Activated CD4-positive, alpha-beta memory T cell treated with anti-CD3 and anti-CD28 coated beads for 36 hours (primary cell): ENCODE measurements at regions of chr7 and their contacts with region 1.

Region 1: DNA sequence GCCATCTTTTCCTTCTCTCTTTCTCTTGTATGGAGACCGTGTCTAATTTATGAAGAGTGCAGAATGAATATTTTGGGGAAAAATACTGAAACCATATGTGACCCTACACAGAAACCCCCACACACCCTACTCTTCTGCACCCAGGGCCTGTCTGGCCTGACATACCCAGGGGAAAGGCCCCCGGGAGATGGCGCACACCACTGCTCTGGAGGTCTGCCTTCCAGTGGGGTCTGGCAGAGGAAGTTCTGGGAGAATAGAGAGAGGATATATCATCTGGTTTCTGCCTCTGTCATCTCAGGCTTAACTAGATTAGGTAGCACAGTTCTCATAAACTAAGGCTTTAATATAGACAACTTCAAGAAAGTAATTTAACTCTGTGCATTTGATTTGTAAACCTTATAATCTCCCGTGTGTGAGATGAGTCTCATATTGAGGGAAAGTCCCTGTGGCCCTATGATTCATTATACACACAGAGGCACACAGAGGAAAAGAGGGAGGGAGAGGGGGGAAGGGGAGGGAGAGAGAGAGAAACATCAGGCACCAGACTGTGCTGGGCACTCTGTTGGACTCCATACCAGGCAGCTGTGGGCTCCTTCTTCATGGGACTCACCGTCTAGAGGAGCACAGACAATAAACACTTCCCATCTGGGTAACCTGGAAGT is 123.3 kb downstream of the AOAH start:
- DNase-seq: peak; percentile 40
- H3K4me3 Mint-ChIP-seq: no peak overlapping the region
- H3K27ac Mint-ChIP-seq: no peak overlapping the region
- H3K4me1 Mint-ChIP-seq: peaks cover 53% of the 10 kb centered on the region
- H3K27me3 Mint-ChIP-seq: no peaks in the 10 kb centered on the region

Region 2: DNA sequence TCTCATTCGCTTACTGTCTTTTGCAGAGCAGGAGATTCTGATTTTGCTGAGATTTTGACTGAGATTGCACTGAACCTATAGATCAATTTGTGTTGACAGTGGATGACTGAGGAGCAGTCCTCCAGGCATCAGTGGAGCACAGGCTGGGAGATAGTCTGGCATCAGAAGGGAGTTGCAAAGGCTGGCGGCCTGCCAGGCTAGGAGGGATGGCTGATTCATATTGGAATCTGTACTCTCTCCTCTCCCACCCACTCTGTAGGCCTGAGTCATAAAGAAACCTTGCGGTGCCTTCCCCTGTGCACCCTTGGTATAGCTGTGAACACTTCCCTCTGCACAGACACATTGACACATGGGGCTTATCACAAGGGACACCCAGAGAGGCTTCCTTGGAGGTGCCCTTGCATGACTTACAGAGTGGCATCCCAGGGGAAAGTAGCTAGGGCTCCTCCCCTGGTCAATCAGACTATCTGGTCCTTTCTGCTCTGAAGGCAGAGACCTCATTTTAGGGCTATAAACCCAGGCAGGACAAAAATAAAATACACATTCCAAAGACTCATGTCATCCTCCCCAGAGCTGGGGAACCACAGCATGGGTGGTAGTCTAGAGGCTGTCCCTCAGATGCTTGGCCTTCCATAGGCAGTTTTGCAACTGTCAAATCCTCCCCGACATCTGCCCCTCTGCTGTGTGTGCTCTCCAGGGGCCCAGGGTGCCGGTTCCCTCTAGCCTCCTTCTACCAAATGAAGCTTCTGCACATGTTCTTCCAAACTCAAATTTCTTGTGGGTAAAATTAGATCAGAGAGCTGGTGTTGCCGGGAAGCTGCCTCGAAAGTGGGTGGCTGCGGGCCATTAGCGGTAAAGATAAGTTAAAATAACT is 485.3 kb before region 1 on chr7:
- CTCF ChIA-PET with region 1: no interaction called
- POLR2A ChIA-PET with region 1: no interaction called
- intact Hi-C with region 1: loop called (anchors 5 kb)
- DNase-seq: peak; percentile 95
- H3K4me3 Mint-ChIP-seq: no peak overlapping the region
- H3K27ac Mint-ChIP-seq: peak overlapping the region; percentile 31
- H3K4me1 Mint-ChIP-seq: peaks cover 36% of the 10 kb centered on the region
- H3K27me3 Mint-ChIP-seq: peaks cover 18% of the 10 kb centered on the region

Region 3: DNA sequence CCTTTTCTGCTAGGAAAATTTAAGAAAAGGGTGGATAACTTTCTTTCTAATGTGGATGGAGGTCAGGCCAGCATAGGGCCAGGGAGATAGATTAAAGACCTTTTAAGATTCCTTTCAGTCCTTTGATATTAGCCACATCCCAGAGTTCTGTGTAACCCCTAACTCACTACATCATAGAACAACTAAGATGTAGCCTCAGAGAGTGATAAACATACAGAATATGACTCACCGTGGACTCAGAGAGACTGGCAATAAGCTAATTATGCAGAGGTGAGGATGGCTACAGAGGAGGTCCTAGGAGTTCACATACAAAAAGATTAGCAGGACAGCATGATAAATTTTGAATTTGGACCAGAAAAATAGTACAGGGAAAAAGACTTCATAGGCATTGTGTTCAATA is 17.7 kb before region 1 on chr7:
- CTCF ChIA-PET with region 1: interaction called, 3 read pairs
- POLR2A ChIA-PET with region 1: interaction called, 4 read pairs
- intact Hi-C with region 1: loop called (anchors 1 kb)
- DNase-seq: no peak
- H3K4me3 Mint-ChIP-seq: no peak overlapping the region
- H3K27ac Mint-ChIP-seq: peak overlapping the region; percentile 47
- H3K4me1 Mint-ChIP-seq: peaks cover 19% of the 10 kb centered on the region
- H3K27me3 Mint-ChIP-seq: no peaks in the 10 kb centered on the region